ENCODE measurements at regions of chr6 and their contacts with region 1.

Region 1: DNA sequence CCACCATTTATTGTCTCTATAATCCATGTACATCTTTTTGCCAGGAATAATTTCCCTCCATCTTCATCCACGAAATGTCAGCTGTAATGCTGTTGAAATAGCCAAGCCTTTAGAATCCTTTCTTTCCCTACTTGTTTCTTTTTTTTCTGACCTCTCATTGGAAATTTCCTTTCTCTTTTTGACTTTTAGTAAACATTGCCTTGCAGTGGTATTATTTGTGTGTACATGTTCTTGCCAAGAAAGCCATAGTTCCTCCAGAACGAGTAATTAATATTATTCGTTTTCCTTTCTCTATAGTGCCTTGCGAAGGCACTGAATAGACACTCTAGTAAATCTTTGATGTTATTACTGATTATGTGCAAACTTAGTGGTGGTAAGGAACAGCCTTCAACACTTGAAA is 282.2 kb downstream of the GJA1 start:
- DNase-seq: no peak
- ATAC-seq: no peak

Region 2: GRCh38 chr6:121666814-121667213 is 50.9 kb before region 1 on chr6:
- intact Hi-C with region 1: loop called (anchors 5 kb)
- DNase-seq: no peak
- ATAC-seq: peak; percentile 84

Measured in Right ventricle myocardium inferior (tissue), 1 donor.